Activated CD8-positive, alpha-beta T cell treated with anti-CD3 and anti-CD28 coated beads, Interleukin-2, amount 10 ng/mL, durations not matched to agents 7 days and 5 days (primary cell): ENCODE measurements at regions of chrX and their contacts with region 1.

Region 1: DNA sequence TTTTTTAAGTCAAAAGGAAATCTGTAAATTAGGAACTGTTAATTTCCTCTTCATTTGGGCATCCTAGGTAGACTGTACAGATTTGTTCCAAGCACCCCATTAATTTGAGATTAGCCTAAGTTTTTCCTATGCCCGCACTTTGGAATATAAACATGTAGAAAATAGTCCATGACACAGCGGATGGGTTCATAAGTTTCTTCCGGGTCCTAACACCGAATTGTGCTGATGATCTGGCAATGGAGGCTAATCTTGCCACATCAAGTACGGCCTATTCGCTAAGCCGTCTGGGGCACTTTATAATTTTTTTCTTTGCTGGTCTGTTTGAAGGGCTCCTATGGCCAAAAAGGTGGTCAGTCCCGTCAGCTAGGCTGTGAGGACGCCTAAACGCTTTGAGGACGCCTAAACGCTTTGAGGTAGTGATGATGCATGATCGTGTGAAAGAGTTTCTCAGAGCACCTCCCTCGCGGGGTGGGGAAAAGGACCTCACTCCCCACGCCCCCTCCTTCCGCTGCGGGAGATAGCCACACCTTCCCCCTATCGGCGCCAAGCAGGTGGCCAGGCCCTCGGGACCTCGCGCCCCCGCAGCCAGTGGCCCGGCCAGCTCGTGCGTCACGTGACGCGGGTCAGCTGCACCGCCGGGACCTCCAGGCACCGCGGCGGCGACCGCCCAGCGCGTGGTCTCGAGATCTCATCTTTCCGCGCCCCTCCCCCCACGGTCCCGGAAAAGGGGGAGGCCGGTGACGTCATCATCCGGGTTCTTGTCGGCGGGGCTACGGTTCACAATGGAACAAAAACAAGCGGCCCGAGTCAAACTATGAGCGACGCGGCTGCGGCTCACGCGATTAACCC is 977 bp upstream of the USP9X start:
- DNase-seq: peak; percentile 96
- ATAC-seq: peak; percentile 72
- H3K4me3 Mint-ChIP-seq: peak overlapping the region; percentile 77
- H3K27ac Mint-ChIP-seq: peak overlapping the region; percentile 100
- H3K4me1 Mint-ChIP-seq: peaks cover 21% of the 10 kb centered on the region
- H3K27me3 Mint-ChIP-seq: no peaks in the 10 kb centered on the region

Region 2: DNA sequence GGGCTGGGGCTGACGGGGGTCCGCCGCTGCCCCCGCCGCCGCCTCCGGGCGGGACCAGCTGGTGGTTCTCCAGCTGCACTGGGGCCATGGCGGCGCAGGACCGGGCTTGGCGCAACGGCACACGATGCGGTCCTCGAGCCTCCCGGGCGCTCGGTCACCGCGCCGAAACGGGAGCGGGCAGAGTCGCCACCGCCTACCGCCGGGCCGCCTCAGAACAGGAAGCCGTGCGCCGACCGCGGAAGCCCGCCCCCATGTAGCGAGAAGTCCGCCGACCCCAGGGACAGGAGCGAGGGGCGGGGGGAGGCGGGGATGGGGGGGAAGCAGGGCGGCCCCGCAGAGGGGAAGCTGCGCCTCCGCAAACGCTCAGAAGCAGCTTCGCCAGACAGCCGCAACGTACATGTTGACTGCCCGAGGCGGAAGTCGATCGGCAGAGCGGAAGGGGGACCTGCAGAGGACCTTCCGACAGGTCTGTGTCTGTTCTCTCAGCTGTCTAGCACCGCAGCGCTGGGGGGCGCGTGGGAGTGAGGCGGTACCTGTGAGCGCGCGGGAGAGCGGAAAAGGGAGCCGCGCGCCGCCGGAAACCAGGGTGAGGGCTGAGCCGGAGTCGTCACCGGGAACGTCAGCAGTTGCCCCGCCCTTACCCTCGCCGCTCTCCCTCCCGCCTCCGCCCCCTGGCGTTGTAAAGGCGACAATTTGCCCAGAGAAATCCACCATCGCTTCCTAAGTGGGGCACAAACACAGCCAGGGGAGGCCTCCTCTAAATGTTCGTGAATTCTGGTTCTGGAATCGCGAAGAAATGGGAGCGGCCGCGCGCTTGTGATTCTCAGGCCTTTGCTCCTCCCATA is 348.7 kb before region 1 on chrX and contains the start of gene MED14:
- CTCF ChIA-PET with region 1: no interaction called
- POLR2A ChIA-PET with region 1: interaction called, 12 read pairs
- DNase-seq: peak; percentile 92
- ATAC-seq: peak; percentile 94
- H3K4me3 Mint-ChIP-seq: peak within 1 kb of the TSS; percentile 86
- H3K27ac Mint-ChIP-seq: peak within 1 kb of the TSS; percentile 97
- H3K4me1 Mint-ChIP-seq: peaks cover 41% of the 10 kb centered on the region
- H3K27me3 Mint-ChIP-seq: no peaks in the 10 kb centered on the region
- total RNA-seq, gene MED14: 40.8 to 41.3 TPM

Region 3: GRCh38 chrX:41010188-41010846 is 74.0 kb before region 1 on chrX:
- CTCF ChIA-PET with region 1: no interaction called
- POLR2A ChIA-PET with region 1: interaction called, 20 read pairs
- DNase-seq: peak; percentile 77
- ATAC-seq: peak; percentile 93
- H3K4me3 Mint-ChIP-seq: peak overlapping the region; percentile 66
- H3K27ac Mint-ChIP-seq: peak overlapping the region; percentile 89
- H3K4me1 Mint-ChIP-seq: peaks cover 23% of the 10 kb centered on the region
- H3K27me3 Mint-ChIP-seq: peaks cover 2% of the 10 kb centered on the region

Region 4: DNA sequence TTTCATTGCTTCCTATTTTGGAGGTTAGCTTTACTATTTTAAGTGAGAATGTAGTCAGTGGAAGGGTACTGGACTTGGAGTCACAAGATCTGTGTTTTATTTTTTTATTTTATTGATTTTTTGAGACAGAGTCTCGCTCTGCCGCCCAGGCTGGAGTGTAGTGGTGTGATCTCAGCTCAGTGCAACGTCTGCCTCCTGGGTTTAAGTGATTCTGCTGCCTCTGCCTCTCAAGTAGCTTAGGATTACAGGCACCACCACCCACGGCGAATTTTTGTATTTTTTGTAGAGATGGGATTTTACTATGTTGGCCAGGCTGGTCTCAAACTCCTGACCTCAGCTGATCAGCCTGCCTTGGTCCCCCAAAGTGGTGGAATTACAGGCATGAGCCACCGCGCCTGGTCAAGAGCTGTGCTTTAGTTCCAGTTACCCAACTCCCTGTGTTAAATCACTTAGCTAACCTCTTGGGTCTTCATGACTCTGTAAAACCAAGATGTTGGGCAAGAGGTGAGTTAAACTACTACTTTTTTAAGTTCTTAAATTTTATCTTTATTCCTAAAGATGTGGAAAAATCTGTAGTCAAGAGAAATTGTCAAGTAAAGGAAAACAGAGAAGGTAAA is 12.2 kb after region 1 on chrX:
- CTCF ChIA-PET with region 1: interaction called, 5 read pairs
- POLR2A ChIA-PET with region 1: interaction called, 14 read pairs
- DNase-seq: no peak
- ATAC-seq: no peak
- H3K4me3 Mint-ChIP-seq: no peak overlapping the region
- H3K27ac Mint-ChIP-seq: no peak overlapping the region
- H3K4me1 Mint-ChIP-seq: peaks cover 35% of the 10 kb centered on the region
- H3K27me3 Mint-ChIP-seq: no peaks in the 10 kb centered on the region

Region 5: DNA sequence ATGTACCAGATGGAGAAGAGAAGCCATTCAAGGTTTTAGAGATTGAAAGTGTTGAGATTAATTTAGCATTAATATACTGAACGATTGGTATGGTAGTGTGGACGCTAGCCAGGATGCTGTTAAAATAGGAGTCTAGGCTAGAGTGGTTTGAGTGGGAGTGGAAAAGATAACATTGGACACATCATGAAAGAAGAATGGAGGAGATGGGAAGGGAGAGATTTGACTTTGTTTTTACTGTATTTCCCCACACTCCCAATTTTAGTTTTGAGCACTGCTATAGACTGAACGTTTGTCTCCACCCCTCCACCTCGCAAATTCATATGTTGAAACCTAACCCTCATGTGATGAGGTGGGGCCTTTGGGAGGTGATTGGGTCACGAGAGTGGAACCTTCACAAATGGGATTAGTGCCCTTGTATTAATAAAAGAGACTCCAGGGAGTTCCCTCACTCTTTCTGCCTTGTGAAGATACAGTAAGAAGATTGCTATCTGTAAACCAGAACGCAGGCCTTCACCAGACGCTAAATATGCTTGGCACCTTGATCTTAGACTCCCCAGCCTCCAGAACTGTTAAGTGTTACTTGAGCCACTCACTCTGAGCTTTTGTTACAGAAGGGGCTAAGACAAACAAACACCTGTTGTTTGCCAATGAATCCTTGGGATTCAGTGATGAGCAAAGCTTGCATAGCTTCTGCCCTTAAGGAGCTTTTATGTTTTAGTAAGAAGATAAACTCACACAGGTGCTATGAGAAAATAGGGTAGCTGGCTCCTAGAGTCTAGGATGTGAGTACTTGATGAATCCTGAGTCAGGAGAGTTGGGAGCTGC is 26.7 kb after region 1 on chrX:
- CTCF ChIA-PET with region 1: interaction called, 18 read pairs
- POLR2A ChIA-PET with region 1: interaction called, 21 read pairs
- DNase-seq: no peak
- ATAC-seq: no peak
- H3K4me3 Mint-ChIP-seq: no peak overlapping the region
- H3K27ac Mint-ChIP-seq: no peak overlapping the region
- H3K4me1 Mint-ChIP-seq: peaks cover 61% of the 10 kb centered on the region
- H3K27me3 Mint-ChIP-seq: no peaks in the 10 kb centered on the region

Region 6: DNA sequence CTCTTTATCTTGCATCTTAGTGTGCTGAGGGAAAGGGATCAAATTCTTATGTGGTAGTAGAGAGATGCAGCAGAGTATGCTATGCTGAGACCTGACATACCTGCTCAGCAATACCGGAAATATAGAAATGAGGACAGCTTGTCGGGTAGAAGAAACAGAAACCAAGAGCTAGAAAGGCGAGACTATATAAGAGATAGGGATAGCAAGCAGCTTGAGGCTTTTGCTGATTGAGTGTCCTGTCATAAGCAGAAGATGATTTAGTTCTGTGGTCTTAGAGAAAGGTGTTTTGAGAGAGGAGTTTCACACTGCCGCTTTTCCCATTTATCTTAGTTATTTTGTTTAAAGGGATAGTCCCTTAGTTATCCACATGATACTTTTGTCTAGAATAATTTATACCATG is 32.7 kb after region 1 on chrX:
- CTCF ChIA-PET with region 1: interaction called, 18 read pairs
- POLR2A ChIA-PET with region 1: interaction called, 21 read pairs
- DNase-seq: peak; percentile 35
- ATAC-seq: peak; percentile 84
- H3K4me3 Mint-ChIP-seq: peak overlapping the region; percentile 67
- H3K27ac Mint-ChIP-seq: peak overlapping the region; percentile 83
- H3K4me1 Mint-ChIP-seq: peaks cover 66% of the 10 kb centered on the region
- H3K27me3 Mint-ChIP-seq: no peaks in the 10 kb centered on the region

Region 7: GRCh38 chrX:41542151-41542935 is 458.1 kb after region 1 on chrX:
- CTCF ChIA-PET with region 1: no interaction called
- POLR2A ChIA-PET with region 1: no interaction called
- DNase-seq: no peak
- ATAC-seq: no peak
- H3K4me3 Mint-ChIP-seq: no peak overlapping the region
- H3K27ac Mint-ChIP-seq: no peak overlapping the region
- H3K4me1 Mint-ChIP-seq: peaks cover 4% of the 10 kb centered on the region
- H3K27me3 Mint-ChIP-seq: no peaks in the 10 kb centered on the region